OCI-LY7 (cell line): ENCODE measurements at regions of chr1 and their contacts with region 1.

Region 1: DNA sequence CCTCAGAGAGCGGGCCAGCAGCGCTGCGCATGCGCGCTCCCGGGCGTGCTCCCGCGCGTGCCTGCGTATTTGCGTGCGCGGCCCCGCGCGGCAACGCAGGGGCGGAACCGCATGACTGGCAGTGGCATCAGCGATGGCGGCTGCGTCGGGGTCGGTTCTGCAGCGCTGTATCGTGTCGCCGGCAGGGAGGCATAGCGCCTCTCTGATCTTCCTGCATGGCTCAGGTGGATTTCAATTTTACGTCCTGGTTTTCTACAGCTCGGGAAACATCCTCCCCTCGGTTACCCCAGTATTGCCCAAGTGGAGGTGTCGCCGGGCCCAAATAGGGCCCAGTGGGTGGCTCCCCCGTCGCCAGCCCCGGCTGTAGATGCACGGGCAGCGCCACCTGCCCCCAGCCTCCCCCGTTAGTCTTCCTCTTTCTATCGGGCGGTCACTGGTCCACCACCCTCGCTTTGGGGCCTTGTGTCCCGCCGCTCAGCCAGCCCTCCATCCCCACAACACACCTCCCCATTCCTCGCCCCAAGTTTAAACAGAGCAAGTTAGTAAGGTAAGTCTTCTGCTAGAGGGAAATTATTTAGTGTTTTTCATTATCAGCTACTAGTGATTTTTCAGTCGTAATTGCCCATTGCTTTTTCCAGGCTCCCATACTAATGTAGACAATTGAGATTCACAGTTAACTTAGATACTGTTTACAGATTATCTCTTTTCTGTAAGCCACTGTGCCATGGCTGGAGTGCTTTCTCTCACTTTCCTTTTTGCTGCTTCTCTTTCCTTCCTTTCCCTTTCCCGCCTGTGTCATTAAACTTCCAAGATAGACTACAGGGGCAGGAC is at the start of gene LYPLAL1:
- DNase-seq: peak; percentile 92
- H3K4me3 ChIP-seq: peak within 1 kb of the TSS; percentile 85
- H3K27ac ChIP-seq: peak within 1 kb of the TSS; percentile 39
- H3K4me1 ChIP-seq: peaks cover 15% of the 10 kb centered on the region
- CTCF ChIP-seq: peak; percentile 47
- total RNA-seq, gene LYPLAL1: 13.2 and 19.6 TPM in 2 replicates

Region 2: DNA sequence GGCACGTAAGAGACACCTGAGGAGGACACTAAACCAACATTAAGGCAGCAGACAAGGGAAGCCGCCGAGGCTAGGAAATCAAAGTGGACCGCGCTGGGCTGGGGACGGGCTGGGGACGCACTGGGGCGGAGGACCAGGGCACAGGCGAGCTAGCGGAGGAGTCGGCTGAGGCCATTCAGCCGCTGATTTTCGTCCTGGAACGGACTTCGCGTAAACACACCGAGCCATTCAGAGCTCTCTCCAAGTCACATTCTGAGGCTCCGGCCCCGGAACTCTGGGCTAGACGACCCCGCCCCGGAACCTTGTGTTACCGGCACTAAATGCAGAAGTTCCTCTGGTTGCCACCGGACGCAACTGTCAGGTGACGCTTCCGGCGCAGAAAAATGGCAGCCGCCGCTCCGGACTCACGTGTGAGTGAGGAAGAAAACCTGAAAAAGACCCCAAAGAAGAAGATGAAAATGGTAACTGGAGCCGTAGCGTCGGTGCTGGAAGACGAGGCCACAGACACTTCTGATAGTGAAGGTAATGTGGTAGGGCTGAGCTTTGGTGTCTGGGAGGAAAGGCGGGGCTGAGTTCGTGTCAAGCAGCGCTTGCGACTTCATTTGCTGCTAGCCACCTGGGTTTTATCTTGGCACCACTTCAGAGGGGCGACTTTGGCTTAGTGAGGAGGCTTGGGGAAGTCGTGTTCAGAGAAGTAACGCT is 888.9 kb before region 1 on chr1 and contains the start of gene RRP15:
- CTCF ChIA-PET with region 1: no interaction called
- POLR2A ChIA-PET with region 1: no interaction called
- intact Hi-C with region 1: loop called (anchors 10 kb)
- DNase-seq: peak; percentile 91
- H3K4me3 ChIP-seq: peak within 1 kb of the TSS; percentile 96
- H3K27ac ChIP-seq: peak within 1 kb of the TSS; percentile 48
- H3K4me1 ChIP-seq: peaks cover 19% of the 10 kb centered on the region
- CTCF ChIP-seq: no peak
- total RNA-seq, gene RRP15: 7.2 and 19.6 TPM in 2 replicates

Region 3: DNA sequence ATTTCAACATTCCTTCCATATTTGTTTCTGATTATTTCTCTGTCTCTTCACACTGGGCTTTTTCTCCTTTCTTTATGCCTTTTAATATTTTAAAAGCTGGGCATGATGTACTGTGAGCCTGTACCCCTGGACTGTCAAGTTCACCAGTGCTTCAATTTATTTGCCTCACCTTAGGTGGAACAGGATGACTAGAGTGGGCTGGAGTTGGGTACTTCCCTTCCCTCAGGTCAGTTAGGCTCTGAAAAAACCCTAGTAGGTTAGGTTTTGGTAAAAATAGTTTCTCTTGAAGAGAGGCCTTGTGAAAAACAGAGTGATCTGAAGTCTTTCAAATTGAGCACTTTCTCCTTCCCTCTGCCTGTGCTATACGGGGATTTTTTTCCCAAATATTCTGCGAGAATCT is 163.3 kb before region 1 on chr1:
- CTCF ChIA-PET with region 1: no interaction called
- POLR2A ChIA-PET with region 1: no interaction called
- intact Hi-C with region 1: no loop called
- DNase-seq: no peak
- H3K4me3 ChIP-seq: no peak overlapping the region
- H3K27ac ChIP-seq: no peak overlapping the region
- H3K4me1 ChIP-seq: no peaks in the 10 kb centered on the region
- CTCF ChIP-seq: no peak

Region 4: GRCh38 chr1:219163401-219163954 is 10.5 kb before region 1 on chr1:
- CTCF ChIA-PET with region 1: no interaction called
- POLR2A ChIA-PET with region 1: interaction called, 12 read pairs
- intact Hi-C with region 1: no loop called
- DNase-seq: no peak
- H3K4me3 ChIP-seq: no peak overlapping the region
- H3K27ac ChIP-seq: no peak overlapping the region
- H3K4me1 ChIP-seq: no peaks in the 10 kb centered on the region
- CTCF ChIP-seq: no peak

Region 5: GRCh38 chr1:219189021-219189824 is 15.2 kb after region 1 on chr1:
- CTCF ChIA-PET with region 1: no interaction called
- POLR2A ChIA-PET with region 1: interaction called, 27 read pairs
- intact Hi-C with region 1: no loop called
- DNase-seq: no peak
- H3K4me3 ChIP-seq: no peak overlapping the region
- H3K27ac ChIP-seq: no peak overlapping the region
- H3K4me1 ChIP-seq: peaks cover 15% of the 10 kb centered on the region
- CTCF ChIP-seq: no peak